ENCODE measurements at regions of chr2 and their contacts with region 1.

Region 1: DNA sequence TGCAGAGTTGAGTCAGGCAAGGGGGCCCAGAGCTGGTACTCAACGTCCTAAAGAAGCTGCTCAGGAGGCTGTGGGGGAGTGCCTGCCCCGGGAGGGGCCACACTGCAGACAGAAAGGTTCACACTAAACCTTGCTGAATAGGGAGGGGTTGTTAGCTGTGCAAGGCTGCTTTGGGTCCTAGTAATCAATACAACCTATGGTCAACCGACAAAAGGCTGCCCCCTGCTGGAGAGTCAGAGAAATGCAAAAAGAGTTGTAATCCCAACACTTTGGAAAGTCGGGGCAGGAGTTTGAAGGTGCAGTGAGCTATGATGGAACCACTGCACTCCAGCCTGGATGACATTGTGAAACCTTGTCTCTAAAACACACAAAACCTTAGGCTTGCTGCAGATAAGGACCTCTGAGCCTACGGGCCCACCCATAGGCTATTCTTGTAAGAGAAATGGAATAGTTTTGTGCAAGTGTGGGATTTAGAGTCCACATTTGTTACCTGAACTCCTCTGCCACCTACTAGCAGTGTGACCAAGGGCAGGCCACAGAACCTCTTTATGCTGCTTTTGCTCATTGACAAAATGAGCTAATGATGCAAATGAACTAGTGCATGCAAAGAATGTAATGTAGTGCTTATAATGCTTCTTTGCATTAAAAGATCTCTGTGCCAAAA is 81.5 kb downstream of the PRPF40A start:
- DNase-seq: peak; percentile 46
- H3K4me3 ChIP-seq: no peak overlapping the region
- H3K27ac ChIP-seq: no peak overlapping the region
- H3K4me1 ChIP-seq: no peaks in the 10 kb centered on the region
- CTCF ChIP-seq: peak; percentile 88

Region 2: DNA sequence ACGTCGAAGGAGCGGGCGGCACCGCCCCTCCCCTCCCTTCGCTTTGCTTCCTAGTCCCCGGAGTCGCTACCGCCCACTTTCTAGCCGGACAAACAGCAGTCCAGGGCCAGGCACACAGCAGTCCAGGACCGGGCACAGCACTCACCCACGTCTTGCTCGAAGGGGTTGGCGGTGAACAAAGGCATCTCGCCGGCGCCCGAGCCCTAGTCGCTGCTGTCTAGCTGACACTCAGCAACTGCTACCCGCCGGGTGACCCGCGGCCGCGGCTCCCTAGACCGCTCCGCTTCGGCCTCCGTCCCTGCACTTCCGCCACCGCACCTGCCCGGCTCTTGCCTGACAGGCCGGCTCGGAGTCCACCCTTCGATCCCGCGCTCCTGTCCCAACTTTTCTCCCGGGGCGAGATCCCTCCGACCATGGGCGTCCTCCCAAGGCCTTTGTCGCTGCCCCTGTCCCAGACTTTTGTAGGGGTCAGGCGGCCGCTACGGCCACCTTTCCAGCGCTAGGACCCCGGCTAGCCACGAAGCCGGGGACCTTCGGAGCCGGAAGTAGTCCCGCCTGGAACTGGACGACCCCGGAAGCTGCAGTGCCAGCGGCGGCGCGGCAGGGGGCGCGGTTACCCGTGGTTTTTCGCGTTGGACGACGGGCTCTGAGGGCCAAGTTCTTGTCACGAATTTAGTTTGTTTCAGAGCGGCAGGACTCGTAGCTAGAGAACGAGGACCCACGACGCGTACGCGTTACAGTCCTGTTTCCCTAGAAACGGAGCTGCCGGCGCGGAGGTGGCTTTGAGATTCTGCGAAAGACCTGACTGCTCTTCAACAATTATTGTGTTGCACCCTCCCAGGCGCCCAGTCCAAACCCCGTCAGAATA is 460.1 kb before region 1 on chr2 and contains the start of gene STAM2:
- CTCF ChIA-PET with region 1: no interaction called
- POLR2A ChIA-PET with region 1: no interaction called
- intact Hi-C with region 1: loop called (anchors 2 kb)
- DNase-seq: peak; percentile 91
- H3K4me3 ChIP-seq: peak within 1 kb of the TSS; percentile 96
- H3K27ac ChIP-seq: peak within 1 kb of the TSS; percentile 67
- H3K4me1 ChIP-seq: peaks cover 16% of the 10 kb centered on the region
- CTCF ChIP-seq: peak; percentile 84
- total RNA-seq, gene STAM2: 17.7 and 19.6 TPM in 2 replicates

Measured in OCI-LY7 (cell line).